GM12878 (cell line): ENCODE measurements at regions of chr3 and their contacts with region 1.

Region 1: GRCh38 chr3:15051531-15051930 is 13.6 kb downstream of the MRPS25 start:
- DNase-seq: no peak
- ATAC-seq: peak; percentile 88
- H3K4me3 ChIP-seq: no peak overlapping the region
- H3K27ac ChIP-seq: peak overlapping the region; percentile 71
- H3K4me1 ChIP-seq: peaks cover 45% of the 10 kb centered on the region
- H3K27me3 ChIP-seq: no peaks in the 10 kb centered on the region
- CTCF ChIP-seq: peak; percentile 76 to 90 (median 80)
- EP300 ChIP-seq: no peak
- POLR2A ChIP-seq: peak; percentile 34; the same call in 1 of the 2 replicates
- RAD21 ChIP-seq: peak; percentile 51

Region 2: GRCh38 chr3:14863333-14864100 is 188.0 kb before region 1 on chr3:
- CTCF ChIA-PET with region 1: no interaction called
- POLR2A ChIA-PET with region 1: no interaction called
- RAD21 ChIA-PET with region 1: no interaction called
- SMC1A ChIA-PET with region 1: no interaction called
- in situ Hi-C with region 1: no loop called
- intact Hi-C with region 1: no loop called
- DNase-seq: no peak
- ATAC-seq: peak; percentile 54; the same call in 2 of the 3 replicates
- H3K4me3 ChIP-seq: no peak overlapping the region
- H3K27ac ChIP-seq: no peak overlapping the region
- H3K4me1 ChIP-seq: peaks cover 6% of the 10 kb centered on the region
- H3K27me3 ChIP-seq: no peaks in the 10 kb centered on the region; a peak in 1 of 4 replicates
- CTCF ChIP-seq: peak; percentile 19 to 27 (median 19); a peak in 4 of 6 replicates
- EP300 ChIP-seq: no peak
- POLR2A ChIP-seq: no peak
- RAD21 ChIP-seq: peak; percentile 27; the same call in 1 of the 2 replicates

Region 3: GRCh38 chr3:14947886-14948555 is 103.5 kb before region 1 on chr3:
- CTCF ChIA-PET with region 1: interaction called, 3 read pairs
- POLR2A ChIA-PET with region 1: interaction called, 4 read pairs
- RAD21 ChIA-PET with region 1: interaction called, 4 read pairs
- SMC1A ChIA-PET with region 1: interaction called, 5 read pairs
- in situ Hi-C with region 1: no loop called
- intact Hi-C with region 1: loop called (anchors 5 kb)
- DNase-seq: peak; percentile 73
- ATAC-seq: peak; percentile 95
- H3K4me3 ChIP-seq: peak overlapping the region; percentile 72
- H3K27ac ChIP-seq: peak overlapping the region; percentile 98
- H3K4me1 ChIP-seq: peaks cover 3% of the 10 kb centered on the region
- H3K27me3 ChIP-seq: no peaks in the 10 kb centered on the region
- CTCF ChIP-seq: no peak
- EP300 ChIP-seq: peak in 1 of 2 experiments; percentile 36; a peak in 1 of 4 replicates
- POLR2A ChIP-seq: peak; percentile 66
- RAD21 ChIP-seq: no peak

Region 4: DNA sequence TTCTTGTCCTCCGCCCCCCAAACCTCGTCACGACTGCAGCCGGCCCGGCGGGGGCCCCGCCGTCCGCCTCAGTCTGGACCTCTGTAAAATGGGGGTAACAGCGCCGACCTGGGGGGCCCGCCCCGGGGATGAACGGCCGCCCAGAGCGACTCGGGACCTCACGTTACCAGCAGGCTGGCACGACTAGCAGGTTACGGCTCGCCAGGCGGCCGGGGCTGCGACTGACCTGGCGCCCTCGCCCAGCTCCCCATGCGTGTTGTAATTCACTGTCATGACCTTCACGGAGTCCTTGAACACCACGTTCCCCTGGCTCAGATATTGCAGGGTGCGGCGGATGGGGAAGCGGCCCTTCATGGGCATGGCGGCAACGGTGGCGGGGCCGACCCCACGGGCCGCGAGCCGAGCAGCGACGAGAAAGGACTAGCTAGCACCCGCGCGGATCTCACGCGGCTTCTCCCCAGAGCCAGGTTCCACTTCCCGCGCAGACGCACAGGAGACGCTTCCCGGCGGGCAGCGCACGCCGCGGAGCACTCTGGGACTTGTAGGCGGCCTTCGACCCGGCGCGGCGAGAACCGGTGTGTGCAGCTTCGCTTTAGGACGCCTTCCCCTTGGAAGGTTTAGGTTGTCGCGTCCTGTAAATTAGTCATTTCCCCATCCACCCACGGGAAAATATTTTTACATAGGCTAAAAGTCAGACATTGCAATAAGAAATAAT is 13.5 kb after region 1 on chr3 and contains the start of gene MRPS25:
- CTCF ChIA-PET with region 1: interaction called, 50 read pairs
- POLR2A ChIA-PET with region 1: interaction called, 30 read pairs
- RAD21 ChIA-PET with region 1: interaction called, 30 read pairs
- SMC1A ChIA-PET with region 1: interaction called, 22 read pairs
- in situ Hi-C with region 1: no loop called
- intact Hi-C with region 1: loop called (anchors 1 kb)
- DNase-seq: peak; percentile 64
- ATAC-seq: peak; percentile 98
- H3K4me3 ChIP-seq: peak within 1 kb of the TSS; percentile 83
- H3K27ac ChIP-seq: peak within 1 kb of the TSS; percentile 89
- H3K4me1 ChIP-seq: peaks cover 13% of the 10 kb centered on the region
- H3K27me3 ChIP-seq: no peaks in the 10 kb centered on the region
- CTCF ChIP-seq: no peak
- EP300 ChIP-seq: no peak
- POLR2A ChIP-seq: peak; percentile 100
- RAD21 ChIP-seq: no peak
- polyA plus RNA-seq, gene MRPS25: 17.0 to 43.6 TPM

Region 5: DNA sequence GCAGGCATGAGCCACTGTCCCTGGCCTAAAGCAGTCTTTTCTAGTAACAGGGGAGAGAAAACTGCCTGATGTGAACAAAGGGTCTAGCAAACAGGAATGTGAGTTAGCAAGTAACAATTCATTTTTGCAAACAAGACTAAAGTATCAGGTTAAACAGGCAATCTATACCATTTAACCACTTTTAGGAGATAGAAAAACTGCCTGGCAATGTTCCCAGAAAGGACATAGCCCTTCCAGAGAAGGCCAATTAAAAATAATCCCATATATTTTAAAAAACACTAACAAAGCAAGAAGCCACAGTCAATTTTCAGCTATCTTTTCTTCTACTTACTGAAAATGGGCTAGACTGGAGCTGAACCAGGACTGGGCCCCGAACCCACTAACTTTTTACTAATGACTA is 41.2 kb after region 1 on chr3:
- CTCF ChIA-PET with region 1: interaction called, 10 read pairs
- POLR2A ChIA-PET with region 1: interaction called, 3 read pairs
- RAD21 ChIA-PET with region 1: no interaction called
- SMC1A ChIA-PET with region 1: interaction called, 11 read pairs
- in situ Hi-C with region 1: no loop called
- intact Hi-C with region 1: no loop called
- DNase-seq: no peak
- ATAC-seq: no peak
- H3K4me3 ChIP-seq: no peak overlapping the region
- H3K27ac ChIP-seq: no peak overlapping the region
- H3K4me1 ChIP-seq: peaks cover 3% of the 10 kb centered on the region
- H3K27me3 ChIP-seq: no peaks in the 10 kb centered on the region
- CTCF ChIP-seq: no peak
- EP300 ChIP-seq: no peak
- POLR2A ChIP-seq: no peak
- RAD21 ChIP-seq: no peak

Region 6: GRCh38 chr3:15108082-15108545 is 56.6 kb after region 1 on chr3:
- CTCF ChIA-PET with region 1: interaction called, 13 read pairs
- POLR2A ChIA-PET with region 1: no interaction called
- RAD21 ChIA-PET with region 1: interaction called, 3 read pairs
- SMC1A ChIA-PET with region 1: interaction called, 4 read pairs
- in situ Hi-C with region 1: no loop called
- intact Hi-C with region 1: no loop called
- DNase-seq: no peak
- ATAC-seq: peak; percentile 99
- H3K4me3 ChIP-seq: no peak overlapping the region
- H3K27ac ChIP-seq: no peak overlapping the region
- H3K4me1 ChIP-seq: no peaks in the 10 kb centered on the region
- H3K27me3 ChIP-seq: no peaks in the 10 kb centered on the region
- CTCF ChIP-seq: peak; percentile 94 to 98 (median 94)
- EP300 ChIP-seq: no peak
- POLR2A ChIP-seq: no peak
- RAD21 ChIP-seq: peak; percentile 82